Activated CD4-positive, alpha-beta T cell treated with anti-CD3 and anti-CD28 coated beads, Interleukin-2, amount 10 ng/mL, durations not matched to agents 24 days and 14 days (primary cell): ENCODE measurements at regions of chr19 and their contacts with region 1.

Region 1: GRCh38 chr19:1478934-1479707 is at the start of gene C19orf25:
- DNase-seq: peak; percentile 98
- H3K4me3 Mint-ChIP-seq: peak within 1 kb of the TSS; percentile 96
- H3K27ac Mint-ChIP-seq: peak within 1 kb of the TSS; percentile 96
- H3K4me1 Mint-ChIP-seq: peaks cover 13% of the 10 kb centered on the region
- H3K27me3 Mint-ChIP-seq: no peaks in the 10 kb centered on the region
- total RNA-seq, gene C19orf25: 34.0 and 38.0 TPM in 2 replicates

Region 2: DNA sequence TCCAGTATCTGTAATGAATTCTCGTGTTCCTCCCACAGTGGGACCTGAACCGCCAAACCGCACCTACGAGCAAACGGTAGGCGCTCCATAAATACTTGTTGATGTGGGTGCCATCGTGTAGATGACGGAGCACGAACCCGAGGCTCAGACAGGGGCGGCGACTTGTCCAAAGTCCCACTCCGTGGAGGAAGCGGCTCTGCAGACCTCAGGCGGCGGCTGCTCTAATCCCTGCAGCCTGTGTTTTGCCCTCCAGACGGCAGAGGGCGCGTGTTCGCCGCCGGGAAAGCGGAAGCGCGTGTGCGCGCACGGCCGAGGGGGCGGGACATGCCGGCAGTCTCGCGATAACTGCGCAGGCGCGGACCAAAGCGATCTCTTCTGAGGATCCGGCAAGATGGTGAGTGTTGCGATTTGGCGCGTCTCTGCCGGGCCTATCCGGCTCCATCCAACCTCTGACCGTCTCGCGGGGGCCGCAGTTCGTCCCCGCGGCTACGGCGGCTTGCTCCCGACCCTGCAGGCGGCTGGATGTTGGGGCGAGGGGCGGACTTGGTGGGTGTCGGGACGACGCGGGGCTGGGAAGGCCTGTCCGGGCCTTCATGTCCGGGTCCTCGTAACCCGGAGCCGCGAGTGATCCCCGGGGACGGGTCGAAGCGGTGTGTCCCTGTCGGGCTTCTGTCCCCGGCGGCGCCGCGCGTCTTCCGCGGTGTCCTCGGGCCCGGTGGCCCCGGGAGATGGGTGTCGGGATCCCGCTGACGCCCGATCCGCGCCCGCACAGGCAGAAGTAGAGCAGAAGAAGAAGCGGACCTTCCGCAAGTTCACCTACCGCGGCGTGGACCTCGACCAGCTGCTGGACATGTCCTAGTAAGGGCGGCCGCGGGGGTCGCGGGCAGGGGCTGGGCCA is 40.8 kb before region 1 on chr19 and contains the start of gene RPS15:
- intact Hi-C with region 1: loop called (anchors 5 kb)
- DNase-seq: peak; percentile 99
- H3K4me3 Mint-ChIP-seq: peak within 1 kb of the TSS; percentile 93
- H3K27ac Mint-ChIP-seq: peak within 1 kb of the TSS; percentile 100
- H3K4me1 Mint-ChIP-seq: peaks cover 18% of the 10 kb centered on the region
- H3K27me3 Mint-ChIP-seq: no peaks in the 10 kb centered on the region
- total RNA-seq, gene RPS15: 1,536 and 1,542 TPM in 2 replicates

Region 3: DNA sequence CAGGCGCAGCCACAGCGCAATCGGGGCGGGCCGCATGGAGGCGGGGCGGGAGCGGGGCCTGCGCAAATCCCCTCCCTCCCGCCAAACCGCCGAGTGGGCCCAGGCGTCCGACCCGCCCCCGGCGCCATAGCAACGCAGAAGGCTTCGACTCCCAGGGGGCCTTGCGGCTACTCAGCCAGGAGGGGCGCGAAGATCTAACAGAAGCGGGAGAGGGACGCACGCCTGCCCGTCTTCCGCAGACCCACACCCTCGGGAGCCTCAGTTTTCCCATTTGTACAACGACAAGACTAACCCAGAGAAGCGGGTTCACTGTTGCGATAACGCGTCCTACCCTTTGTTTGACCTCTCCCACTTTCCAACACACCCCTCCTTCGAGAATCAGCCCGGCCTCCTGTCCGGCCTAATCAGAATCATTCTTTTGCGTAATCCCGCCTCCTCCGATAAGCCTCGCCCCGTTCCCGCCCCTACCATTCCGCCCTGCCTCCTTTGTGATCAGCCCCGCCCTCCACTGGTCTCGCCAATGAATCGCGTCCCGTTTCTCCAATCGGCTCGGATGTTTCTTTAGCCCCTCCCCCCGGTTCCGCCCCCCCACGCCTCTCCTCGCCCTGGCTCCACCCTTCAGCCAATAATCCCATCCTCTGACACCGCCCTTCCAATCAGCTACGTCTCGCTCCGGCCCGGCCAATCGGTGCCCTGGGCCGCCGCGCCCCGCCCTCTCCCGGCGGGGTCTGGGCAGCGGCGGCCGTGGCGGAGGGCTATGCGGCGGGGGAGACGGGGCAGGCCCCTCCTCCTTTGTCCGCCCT is 11.4 kb after region 1 on chr19 and contains the start of gene PCSK4:
- intact Hi-C with region 1: loop called (anchors 1 kb)
- DNase-seq: peak; percentile 99
- H3K4me3 Mint-ChIP-seq: peak within 1 kb of the TSS; percentile 90
- H3K27ac Mint-ChIP-seq: peak within 1 kb of the TSS; percentile 85
- H3K4me1 Mint-ChIP-seq: peaks cover 6% of the 10 kb centered on the region
- H3K27me3 Mint-ChIP-seq: peaks cover 8% of the 10 kb centered on the region
- total RNA-seq, gene PCSK4: 1.0 and 1.6 TPM in 2 replicates

Region 4: DNA sequence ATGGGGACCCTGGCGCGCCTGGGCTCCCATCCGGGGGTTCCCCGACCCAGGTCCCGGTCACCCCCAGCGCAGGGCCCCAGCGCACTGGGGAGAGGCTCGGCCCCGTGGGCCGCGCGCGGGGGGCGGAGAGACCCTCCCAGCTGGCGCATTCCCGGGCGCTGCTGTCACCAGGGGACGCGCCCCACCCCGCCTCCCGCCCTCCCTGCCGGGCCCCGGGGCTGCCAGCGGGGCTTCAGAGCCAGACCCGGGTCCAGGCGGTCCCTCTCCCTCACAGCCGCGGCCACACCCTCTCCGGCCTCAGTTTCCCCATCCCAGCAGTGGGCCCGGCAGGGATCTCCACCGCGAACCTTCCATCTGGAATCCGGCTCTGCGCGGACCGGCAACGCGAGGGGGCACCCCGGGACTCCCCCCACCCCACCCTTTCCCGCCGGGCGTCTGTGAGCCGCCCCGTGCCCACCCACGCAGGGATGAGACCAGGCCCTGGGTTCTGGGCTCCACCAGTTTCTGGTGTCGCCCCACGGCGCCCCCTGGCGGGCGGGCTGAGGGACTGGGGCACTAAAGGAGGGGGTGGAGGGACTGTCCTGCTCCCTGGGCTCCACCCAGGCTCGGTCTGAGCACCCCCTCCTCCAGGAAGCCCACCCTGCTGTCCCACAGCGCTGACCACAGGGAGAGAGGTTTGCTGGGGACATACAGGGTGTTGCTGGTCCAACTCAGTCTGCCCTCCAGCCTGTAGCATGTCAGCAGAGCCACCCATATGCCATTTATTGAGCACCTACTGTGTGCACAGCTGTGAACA is 34.6 kb after region 1 on chr19:
- intact Hi-C with region 1: loop called (anchors 5 kb)
- DNase-seq: peak; percentile 91
- H3K4me3 Mint-ChIP-seq: peak overlapping the region; percentile 55
- H3K27ac Mint-ChIP-seq: no peak overlapping the region
- H3K4me1 Mint-ChIP-seq: peaks cover 2% of the 10 kb centered on the region
- H3K27me3 Mint-ChIP-seq: peaks cover 14% of the 10 kb centered on the region

Region 5: DNA sequence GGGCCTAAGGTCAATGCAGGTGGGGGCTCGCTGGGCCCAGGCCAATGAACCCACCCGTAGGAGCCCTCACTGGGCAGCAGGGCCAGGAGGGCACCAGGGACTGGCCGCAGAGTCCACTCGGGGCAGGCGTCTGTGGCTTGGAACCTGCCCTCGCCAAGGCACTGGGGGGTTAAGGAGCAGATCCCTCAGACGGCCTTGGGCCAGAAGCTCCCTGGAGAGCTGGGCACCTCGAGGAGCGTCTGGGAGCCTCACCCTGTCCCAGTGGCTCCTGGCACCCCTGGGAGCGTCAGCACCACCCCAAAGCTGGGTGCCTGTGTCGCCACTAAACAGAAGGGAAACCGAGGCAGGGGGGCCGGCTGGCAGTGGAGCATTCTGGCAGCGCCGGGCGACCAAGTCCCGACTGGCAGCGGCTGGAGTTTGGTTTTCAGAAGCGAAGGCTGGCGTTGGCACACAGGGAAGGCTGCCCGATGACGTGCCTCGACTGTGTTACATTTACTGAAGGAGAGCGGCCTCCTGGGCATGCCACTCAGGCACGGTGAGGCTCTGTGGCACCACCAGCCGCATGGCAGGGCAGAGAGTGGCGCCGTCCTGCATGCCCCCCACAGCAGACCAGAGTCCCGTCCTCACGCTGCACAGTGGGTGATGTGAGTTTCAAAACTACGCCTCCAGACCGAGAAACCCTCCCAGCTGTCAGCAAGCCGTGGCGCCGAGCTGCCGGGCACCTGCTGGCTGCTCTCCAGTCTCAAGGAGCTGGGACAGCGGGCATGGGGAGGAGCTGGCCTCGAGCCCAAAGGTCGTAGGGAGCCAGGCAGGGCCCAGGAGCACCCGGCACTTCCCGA is 98.2 kb after region 1 on chr19:
- intact Hi-C with region 1: no loop called
- DNase-seq: no peak
- H3K4me3 Mint-ChIP-seq: no peak overlapping the region
- H3K27ac Mint-ChIP-seq: no peak overlapping the region
- H3K4me1 Mint-ChIP-seq: no peaks in the 10 kb centered on the region
- H3K27me3 Mint-ChIP-seq: no peaks in the 10 kb centered on the region